ENCODE measurements at regions of chr1 and their contacts with region 1.

Region 1: GRCh38 chr1:234065794-234066447 is 161.4 kb downstream of the SLC35F3 start:
- DNase-seq: peak; percentile 52
- H3K4me3 ChIP-seq: no peak overlapping the region
- H3K27ac ChIP-seq: no peak overlapping the region
- H3K4me1 ChIP-seq: no peaks in the 10 kb centered on the region
- H3K27me3 ChIP-seq: no peaks in the 10 kb centered on the region
- CTCF ChIP-seq: peak; percentile 62 to 77
- POLR2A ChIP-seq: no peak

Region 2: DNA sequence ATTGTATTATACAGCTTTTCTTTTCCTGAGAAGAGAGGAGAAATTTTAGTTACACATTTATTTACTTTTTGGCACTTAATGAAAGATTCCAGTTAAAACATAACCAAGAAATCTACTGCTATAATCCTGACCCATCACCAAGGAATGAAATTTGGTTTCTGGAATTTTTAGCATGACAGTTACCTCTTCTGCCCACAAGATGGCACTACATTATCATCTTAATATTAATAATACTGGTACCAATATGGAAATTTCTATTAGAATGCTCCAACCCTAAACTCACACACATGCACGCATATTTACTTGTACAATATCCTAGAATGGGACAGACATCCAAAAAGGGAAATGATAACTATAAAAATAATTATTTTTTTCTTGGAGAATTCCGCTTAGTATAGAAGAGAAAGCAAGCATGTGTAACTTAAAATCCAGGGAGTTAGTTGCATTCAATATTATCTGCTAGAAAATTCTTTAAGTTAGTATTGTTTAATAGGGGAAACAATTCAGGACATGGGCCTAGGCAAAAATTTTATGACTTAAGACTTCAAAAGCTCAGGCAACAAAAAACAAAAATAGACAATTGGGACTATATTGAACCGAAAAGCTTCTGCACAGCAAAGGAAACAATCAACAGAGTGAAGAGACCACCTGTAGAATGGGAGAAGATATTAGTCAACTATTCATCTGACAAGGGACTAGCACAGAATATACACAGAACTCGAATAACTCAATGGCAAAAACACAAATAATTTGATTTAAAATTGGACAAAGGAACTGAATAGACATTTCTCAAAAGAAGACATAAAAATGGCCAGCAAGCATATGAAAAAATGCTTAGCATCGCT is 701.0 kb before region 1 on chr1:
- CTCF ChIA-PET with region 1: interaction called, 23 read pairs
- POLR2A ChIA-PET with region 1: no interaction called
- dilution Hi-C with region 1: no loop called
- intact Hi-C with region 1: loop called (anchors 1 kb)
- DNase-seq: peak; percentile 21
- H3K4me3 ChIP-seq: no peak overlapping the region
- H3K27ac ChIP-seq: no peak overlapping the region
- H3K4me1 ChIP-seq: no peaks in the 10 kb centered on the region
- H3K27me3 ChIP-seq: no peaks in the 10 kb centered on the region
- CTCF ChIP-seq: peak; percentile 35 to 41
- POLR2A ChIP-seq: no peak

Region 3: DNA sequence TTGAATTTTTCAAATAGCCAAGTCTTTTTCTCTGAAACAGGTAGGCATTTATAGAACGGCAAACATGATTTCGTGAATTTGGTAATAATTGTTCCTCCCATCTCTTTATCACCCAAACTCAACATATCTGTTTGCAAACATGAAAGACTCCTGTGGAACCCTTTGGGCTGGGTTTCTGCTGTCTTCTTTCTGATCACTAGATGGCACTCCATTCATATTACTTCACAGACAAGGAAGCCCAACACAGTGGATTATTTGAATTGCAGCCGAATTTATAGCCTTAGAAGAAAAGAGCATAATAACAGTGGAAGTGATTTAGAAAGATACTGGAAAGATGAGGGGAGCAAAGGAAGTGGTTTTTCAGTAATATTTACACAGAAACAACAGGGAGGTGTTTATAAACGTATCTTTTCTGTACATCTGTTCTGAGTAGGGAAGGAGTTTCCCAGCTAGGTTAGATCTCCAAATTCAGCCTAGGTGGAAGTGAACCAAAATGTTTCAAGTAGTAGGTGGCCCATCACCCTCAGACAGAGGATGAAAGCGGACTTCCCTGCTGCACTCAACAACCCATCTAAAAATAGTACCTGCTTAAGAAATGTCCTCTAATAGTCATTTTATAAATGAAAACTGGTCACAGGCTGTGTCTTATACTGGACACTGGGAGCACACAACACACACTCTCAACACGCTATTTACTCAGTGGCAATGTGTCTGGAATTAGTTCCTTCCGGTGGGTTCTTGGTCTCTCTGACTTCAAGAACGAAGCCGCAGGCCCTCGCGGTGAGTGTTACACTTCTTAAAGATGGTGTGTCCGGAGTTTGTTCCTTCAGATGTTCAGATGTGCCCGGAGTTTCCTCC is 670.8 kb before region 1 on chr1:
- CTCF ChIA-PET with region 1: interaction called, 20 read pairs
- POLR2A ChIA-PET with region 1: no interaction called
- dilution Hi-C with region 1: no loop called
- intact Hi-C with region 1: loop called (anchors 1 kb)
- DNase-seq: peak; percentile 59
- H3K4me3 ChIP-seq: no peak overlapping the region
- H3K27ac ChIP-seq: no peak overlapping the region
- H3K4me1 ChIP-seq: no peaks in the 10 kb centered on the region
- H3K27me3 ChIP-seq: peaks cover 0 to 2% of the 10 kb centered on the region in 2 experiments
- CTCF ChIP-seq: peak; percentile 40 to 64
- POLR2A ChIP-seq: no peak

Region 4: GRCh38 chr1:233440951-233441401 is 624.9 kb before region 1 on chr1:
- CTCF ChIA-PET with region 1: interaction called, 36 read pairs
- POLR2A ChIA-PET with region 1: no interaction called
- dilution Hi-C with region 1: no loop called
- intact Hi-C with region 1: loop called (anchors 1 kb)
- DNase-seq: peak; percentile 43
- H3K4me3 ChIP-seq: no peak overlapping the region
- H3K27ac ChIP-seq: no peak overlapping the region
- H3K4me1 ChIP-seq: no peaks in the 10 kb centered on the region
- H3K27me3 ChIP-seq: no peaks in the 10 kb centered on the region
- CTCF ChIP-seq: peak; percentile 50
- POLR2A ChIP-seq: no peak

Region 5: DNA sequence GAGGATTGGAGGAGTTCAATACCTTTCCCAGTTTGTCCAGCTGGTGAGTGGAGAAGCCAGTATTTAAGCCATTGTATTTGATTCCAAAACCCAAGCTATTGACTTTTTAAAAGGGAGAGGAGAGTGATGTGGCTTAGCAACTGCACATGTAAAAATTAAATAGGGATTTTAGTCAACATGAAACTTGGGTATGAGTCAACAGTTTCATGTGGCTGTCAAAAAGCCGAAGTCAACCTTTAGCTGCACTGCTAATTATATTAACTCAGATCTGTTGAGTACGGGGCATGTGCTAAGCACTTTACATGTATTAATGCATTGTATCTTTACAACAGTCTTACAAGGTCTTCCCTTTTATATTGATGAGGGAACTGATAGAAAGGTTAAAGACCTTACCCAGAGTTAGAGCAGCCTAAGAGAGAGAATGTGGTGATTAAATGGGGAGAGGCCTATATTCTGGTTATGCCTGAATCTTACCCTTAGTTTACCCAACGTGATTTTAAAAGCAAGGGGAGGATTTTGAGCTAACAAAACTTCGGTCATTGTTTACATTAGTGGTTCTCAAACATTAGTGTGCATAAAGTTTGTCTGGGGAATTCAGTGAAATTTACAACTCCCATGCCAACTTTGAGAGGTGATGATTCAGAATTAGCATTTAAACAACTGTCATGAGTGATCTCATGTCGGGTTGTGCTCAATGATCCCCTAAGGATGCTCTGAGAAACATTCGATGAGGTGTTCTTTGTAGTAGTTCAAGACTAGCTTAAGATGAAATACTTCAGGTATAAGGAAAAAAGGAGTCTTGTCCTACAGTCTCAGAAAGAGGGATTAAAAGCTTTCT is 168.4 kb before region 1 on chr1:
- CTCF ChIA-PET with region 1: no interaction called
- POLR2A ChIA-PET with region 1: no interaction called
- dilution Hi-C with region 1: no loop called
- intact Hi-C with region 1: no loop called
- DNase-seq: no peak
- H3K4me3 ChIP-seq: no peak overlapping the region
- H3K27ac ChIP-seq: no peak overlapping the region
- H3K4me1 ChIP-seq: no peaks in the 10 kb centered on the region
- H3K27me3 ChIP-seq: no peaks in the 10 kb centered on the region
- CTCF ChIP-seq: no peak
- POLR2A ChIP-seq: no peak